ENCODE measurements at regions of chr9 and their contacts with region 1.

Region 1: DNA sequence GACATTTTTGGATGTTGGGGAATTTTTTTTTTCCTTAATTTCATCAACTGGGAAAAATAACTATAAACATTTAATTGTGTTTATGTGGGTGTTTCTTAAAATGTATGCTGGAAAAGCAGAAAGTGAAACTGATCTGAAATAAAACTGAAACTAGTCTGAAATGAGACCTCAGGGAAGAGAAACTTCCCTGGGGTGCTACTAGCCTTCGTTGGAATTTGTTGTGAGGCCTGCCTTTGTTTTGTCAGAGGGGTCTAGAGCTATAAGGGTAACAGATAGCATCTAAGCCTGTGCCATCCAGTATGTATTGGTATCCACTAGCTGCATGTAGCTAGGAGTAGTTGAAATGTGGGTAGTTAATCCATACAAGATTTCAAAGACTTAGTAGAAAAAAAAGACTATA is 10.4 kb downstream of the ZNF618 start:
- DNase-seq: no peak
- H3K4me3 ChIP-seq: peak overlapping the region; percentile 43 to 47
- H3K27ac ChIP-seq: peak overlapping the region in 1 of 2 donors; percentile 50
- H3K4me1 ChIP-seq: peaks cover 0 to 47% (median 34%) of the 10 kb centered on the region in 4 donors
- H3K27me3 ChIP-seq: no peaks in the 10 kb centered on the region
- CTCF ChIP-seq: no peak

Region 2: GRCh38 chr9:113929634-113930389 is 43.3 kb after region 1 on chr9:
- intact Hi-C with region 1: loop called (anchors 10 kb)
- DNase-seq: peak in 1 of 2 donors; percentile 11
- H3K4me3 ChIP-seq: no peak overlapping the region
- H3K27ac ChIP-seq: peak overlapping the region; percentile 27 to 56
- H3K4me1 ChIP-seq: peaks cover 0 to 41% (median 27%) of the 10 kb centered on the region in 4 donors
- H3K27me3 ChIP-seq: no peaks in the 10 kb centered on the region
- CTCF ChIP-seq: no peak

Measured in tibial artery (tissue), 4 donors.